ENCODE measurements at regions of chr20 and their contacts with region 1.

Region 1: DNA sequence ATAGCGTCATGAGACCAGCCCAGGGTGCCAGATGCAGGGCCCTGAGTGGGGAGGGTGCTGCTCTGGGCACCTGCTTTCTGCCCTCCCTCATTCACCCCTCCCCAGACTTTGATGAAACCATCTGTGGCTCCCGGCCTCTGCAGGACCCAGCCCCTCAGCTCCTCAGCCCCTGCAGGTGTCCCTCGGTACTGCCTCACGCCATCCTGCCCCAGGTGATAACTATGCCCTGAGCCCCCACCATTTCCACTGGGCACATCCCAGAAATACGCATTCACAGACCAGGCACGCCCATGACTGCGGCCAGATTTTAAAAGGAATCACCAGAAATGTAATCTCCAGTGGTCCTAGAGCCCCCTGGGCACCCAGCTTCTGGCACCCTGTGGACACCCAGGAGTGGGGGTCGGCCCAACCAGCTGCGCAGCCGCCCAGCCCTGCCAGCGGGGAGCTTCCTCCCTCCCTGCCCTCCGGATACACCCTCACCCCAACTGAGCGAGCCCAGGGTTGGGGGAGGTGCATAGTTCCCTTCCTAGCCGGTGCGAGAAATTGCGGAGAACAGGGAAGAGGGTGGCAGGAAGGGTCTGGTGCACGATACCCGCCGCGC is 615 bp upstream of the NTSR1 start:
- DNase-seq: peak; percentile 73
- H3K4me3 ChIP-seq: peak overlapping the region; percentile 60
- H3K27ac ChIP-seq: peak overlapping the region; percentile 57
- H3K4me1 ChIP-seq: peaks cover 58% of the 10 kb centered on the region
- H3K27me3 ChIP-seq: peaks cover 4% of the 10 kb centered on the region
- CTCF ChIP-seq: peak; percentile 51

Region 2: DNA sequence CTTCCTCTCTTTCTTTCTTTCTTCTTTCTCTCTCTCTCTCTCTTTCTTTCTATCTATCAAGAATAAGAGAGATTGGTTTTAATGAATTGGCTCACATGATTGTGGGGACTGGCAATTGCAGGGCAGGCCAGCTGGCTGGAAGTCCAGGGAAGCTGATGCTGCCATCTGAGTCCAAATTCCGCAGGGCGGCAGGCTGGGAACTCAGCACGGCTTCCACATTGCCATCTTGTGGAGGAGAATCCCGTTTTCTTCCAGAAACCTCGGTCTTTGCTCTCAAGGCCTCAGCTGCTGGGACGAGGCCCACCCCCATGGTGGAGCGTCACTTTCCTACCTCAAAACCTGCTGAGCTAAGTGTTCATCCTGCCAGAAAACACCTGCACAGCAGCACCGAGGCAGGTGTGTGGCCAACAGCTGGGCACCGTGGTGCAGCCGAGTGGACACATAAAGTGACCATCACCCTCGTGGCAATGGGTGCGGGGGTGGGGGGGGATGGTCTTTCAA is 124.6 kb before region 1 on chr20:
- CTCF ChIA-PET with region 1: no interaction called
- POLR2A ChIA-PET with region 1: no interaction called
- intact Hi-C with region 1: no loop called
- DNase-seq: no peak
- H3K4me3 ChIP-seq: no peak overlapping the region
- H3K27ac ChIP-seq: no peak overlapping the region
- H3K4me1 ChIP-seq: peaks cover 3% of the 10 kb centered on the region
- H3K27me3 ChIP-seq: peaks cover 64% of the 10 kb centered on the region
- CTCF ChIP-seq: 0 out of 2 replicates have a peak, but pooled peaks have one; percentile 20

Region 3: DNA sequence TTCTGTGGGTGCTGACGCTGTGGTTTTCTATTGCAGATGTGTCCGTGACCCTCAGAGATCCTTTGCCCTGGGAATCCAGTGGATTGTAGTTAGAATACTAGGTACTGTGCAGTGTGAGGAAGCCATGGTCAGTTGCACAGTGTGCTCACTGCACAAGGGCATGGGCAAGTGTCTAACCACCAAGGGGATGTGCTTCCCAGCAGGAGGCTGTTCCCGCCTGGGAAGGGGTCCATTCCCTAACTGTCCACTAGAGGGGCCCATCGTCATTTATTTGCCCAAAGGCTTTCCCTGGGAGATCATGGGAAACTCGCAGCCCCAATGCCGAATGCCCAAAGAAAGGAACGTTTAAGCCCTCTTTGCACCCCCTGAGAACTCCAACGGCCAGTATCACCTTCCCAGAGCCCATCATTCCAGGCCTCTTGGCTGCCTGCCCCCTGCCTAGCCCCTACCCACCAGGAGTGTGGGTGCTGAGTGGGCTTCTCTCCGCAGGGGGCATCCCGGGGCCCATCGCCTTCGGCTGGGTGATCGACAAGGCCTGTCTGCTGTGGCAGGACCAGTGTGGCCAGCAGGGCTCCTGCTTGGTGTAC is 39.5 kb before region 1 on chr20:
- CTCF ChIA-PET with region 1: no interaction called
- POLR2A ChIA-PET with region 1: interaction called, 13 read pairs
- intact Hi-C with region 1: no loop called
- DNase-seq: peak; percentile 86
- H3K4me3 ChIP-seq: no peak overlapping the region
- H3K27ac ChIP-seq: no peak overlapping the region
- H3K4me1 ChIP-seq: no peaks in the 10 kb centered on the region
- H3K27me3 ChIP-seq: no peaks in the 10 kb centered on the region
- CTCF ChIP-seq: peak; percentile 87

Region 4: GRCh38 chr20:62739581-62740285 is 31.7 kb after region 1 on chr20:
- CTCF ChIA-PET with region 1: interaction called, 3 read pairs
- POLR2A ChIA-PET with region 1: no interaction called
- intact Hi-C with region 1: loop called (anchors 1 kb)
- DNase-seq: peak; percentile 76
- H3K4me3 ChIP-seq: peak overlapping the region; percentile 14
- H3K27ac ChIP-seq: peak overlapping the region; percentile 97
- H3K4me1 ChIP-seq: peaks cover 70% of the 10 kb centered on the region
- H3K27me3 ChIP-seq: no peaks in the 10 kb centered on the region
- CTCF ChIP-seq: no peak